Activated T-helper 1 cell treated with anti-CD3 and anti-CD28 coated beads, Interleukin-12 subunit alpha, Interleukin-12 subunit beta, Interleukin-2, Interleukin-4 antibody, amounts not matched to agents 30 ng/mL and 10 ng/mL and 1 ng/mL, durations not matched to agents 14 hours and 24 hours and 36 hours (primary cell): ENCODE measurements at regions of chr16 and their contacts with region 1.

Region 1: GRCh38 chr16:2340564-2341455 is at the start of gene ABCA3:
- DNase-seq: peak; percentile 98
- H3K4me3 Mint-ChIP-seq: peak within 1 kb of the TSS; percentile 90
- H3K27ac Mint-ChIP-seq: peak within 1 kb of the TSS; percentile 7
- H3K4me1 Mint-ChIP-seq: peaks cover 30% of the 10 kb centered on the region
- H3K27me3 Mint-ChIP-seq: peaks cover 33% of the 10 kb centered on the region
- total RNA-seq, gene ABCA3: 9.0 and 10.0 TPM in 2 replicates

Region 2: DNA sequence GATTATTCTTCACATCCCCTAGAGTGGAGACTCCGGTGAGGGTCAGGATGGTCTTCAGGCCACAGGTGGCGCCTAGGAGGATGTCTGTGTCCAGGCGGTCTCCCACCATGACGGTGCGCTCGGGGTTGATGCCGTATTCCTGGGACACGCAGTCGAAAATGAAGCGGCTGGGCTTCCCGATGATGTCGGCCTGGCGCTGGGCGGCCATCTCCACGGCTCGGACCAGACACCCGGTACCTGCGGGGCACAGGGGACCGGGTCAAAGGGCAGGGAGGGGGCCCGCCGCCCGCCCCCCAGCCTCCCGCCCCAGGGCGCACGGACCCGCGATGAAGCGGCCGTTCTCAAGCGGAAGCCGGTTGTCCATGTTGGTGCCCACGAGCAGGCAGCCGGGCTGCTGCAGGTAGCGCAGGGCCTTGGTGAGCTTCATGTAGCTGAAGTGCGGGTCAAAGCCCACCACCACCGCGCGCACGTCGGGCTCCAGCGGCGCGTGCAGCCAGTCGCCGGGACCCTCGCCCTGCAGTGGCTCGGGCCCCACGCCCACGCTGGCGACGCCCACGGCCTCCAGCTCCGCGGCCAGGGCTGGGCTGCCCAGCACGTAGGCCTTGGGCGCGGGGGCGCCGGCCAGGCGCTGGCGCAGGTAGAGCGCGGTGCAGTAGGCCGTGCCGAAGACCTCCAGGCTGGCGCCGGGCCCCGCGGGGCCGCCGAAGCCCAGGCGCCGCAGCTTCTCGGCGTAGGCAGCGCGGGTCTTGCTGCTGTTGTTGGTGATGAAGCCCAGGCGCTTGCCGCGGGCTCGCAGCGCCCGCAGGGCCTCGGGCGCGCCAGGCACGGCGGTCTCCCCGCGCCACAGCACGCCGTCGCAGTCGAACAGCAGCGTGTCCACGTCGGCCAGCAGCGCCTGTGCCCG is 126.7 kb before region 1 on chr16:
- intact Hi-C with region 1: loop called (anchors 10 kb)
- DNase-seq: no peak
- H3K4me3 Mint-ChIP-seq: peak overlapping the region; percentile 87
- H3K27ac Mint-ChIP-seq: peak overlapping the region; percentile 65
- H3K4me1 Mint-ChIP-seq: peaks cover 18% of the 10 kb centered on the region
- H3K27me3 Mint-ChIP-seq: no peaks in the 10 kb centered on the region

Region 3: DNA sequence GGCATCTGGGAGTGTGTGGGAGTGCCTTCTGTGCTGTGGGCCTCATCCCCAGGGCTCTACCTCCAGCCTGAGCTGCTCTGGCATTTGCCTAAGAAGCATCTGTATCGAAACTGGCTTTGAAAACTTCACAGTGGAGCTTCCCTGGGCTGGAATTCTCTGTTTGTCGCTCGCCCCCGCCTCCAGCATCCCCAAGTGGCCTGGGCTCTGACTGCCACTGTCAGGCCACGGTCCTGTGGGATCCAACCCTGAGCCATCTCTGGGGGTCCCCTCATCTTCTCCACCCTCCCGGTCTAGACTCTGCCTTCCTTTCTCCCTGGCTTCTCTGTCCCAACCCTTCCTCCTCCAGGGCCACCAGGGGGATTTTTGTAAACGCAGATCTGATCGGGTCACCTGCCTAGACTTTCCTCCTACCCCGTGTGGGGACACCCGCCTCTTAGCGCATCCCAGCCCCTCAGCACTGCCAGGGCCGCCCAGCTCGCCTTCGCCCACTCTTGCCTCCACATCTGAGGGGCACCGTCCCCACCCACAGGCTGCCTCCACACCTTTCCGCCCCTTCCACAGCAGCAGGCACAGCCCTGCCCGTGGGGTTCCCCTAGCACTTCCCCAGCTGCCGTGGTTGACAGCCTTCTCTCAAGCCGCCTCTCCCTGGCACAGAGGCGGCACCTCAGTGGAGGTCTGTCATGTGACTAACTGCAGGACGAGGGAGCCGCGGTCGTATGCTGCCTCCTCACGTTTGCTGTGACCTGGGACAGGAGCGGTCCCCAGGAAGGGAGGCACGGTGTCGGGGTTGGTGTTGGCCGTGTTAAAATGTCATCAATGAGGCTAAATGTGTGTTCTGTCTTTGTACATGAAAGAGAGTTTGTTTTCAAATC is 146.1 kb after region 1 on chr16:
- intact Hi-C with region 1: loop called (anchors 5 kb)
- DNase-seq: peak; percentile 65
- H3K4me3 Mint-ChIP-seq: peak overlapping the region; percentile 9
- H3K27ac Mint-ChIP-seq: peak overlapping the region; percentile 65
- H3K4me1 Mint-ChIP-seq: peaks cover 14% of the 10 kb centered on the region
- H3K27me3 Mint-ChIP-seq: no peaks in the 10 kb centered on the region

Region 4: DNA sequence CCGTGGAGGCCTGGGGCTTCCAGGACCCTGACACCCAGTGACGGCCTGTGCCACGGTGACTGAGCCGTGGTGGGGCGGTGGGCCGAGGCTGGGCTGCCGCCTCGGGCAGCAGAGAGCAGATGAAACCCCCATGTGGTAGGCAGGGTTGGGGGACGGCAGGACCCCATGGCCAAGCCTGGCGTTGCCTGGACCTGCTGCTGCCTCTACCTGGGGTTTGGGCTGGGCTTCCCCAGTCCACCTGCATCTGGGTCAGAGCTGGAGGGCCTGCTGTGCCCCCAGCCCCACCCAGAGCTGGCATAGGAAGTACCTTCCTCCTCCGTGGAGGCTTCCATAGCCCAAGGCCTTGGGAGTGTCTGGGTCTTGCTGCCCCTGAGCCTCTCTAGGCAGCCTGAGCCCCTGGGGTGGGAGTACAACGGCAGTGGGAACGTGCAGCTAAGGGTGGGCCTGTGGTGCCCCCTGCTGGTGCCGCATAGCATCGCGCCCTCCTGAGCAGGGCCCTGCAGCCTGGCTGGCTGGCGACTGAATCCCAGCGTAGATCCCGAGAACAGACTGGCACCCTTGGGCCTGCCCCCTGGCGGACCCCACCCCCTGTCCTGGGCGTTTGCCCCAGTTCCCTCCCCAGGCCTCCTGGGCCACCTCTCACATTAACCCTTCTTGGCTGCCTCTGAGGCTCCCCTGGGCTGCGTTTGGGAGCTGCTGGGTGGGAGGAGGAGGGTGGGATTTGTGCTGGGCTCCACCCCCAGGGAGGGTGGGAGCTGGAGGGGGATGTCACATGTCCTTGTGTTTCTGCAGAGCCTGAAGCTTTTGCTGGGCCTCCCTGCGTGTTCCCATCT is 160.3 kb after region 1 on chr16:
- intact Hi-C with region 1: loop called (anchors 1 kb)
- DNase-seq: peak; percentile 67
- H3K4me3 Mint-ChIP-seq: no peak overlapping the region
- H3K27ac Mint-ChIP-seq: no peak overlapping the region
- H3K4me1 Mint-ChIP-seq: no peaks in the 10 kb centered on the region
- H3K27me3 Mint-ChIP-seq: no peaks in the 10 kb centered on the region